ENCODE measurements at regions of chr14 and their contacts with region 1.

Region 1: GRCh38 chr14:96215452-96216244 is 11.0 kb downstream of the BDKRB2 start:
- DNase-seq: no peak
- H3K4me3 ChIP-seq: no peak overlapping the region
- H3K27ac ChIP-seq: peak overlapping the region; percentile 57
- H3K27me3 ChIP-seq: no peaks in the 10 kb centered on the region
- CTCF ChIP-seq: no peak

Region 2: GRCh38 chr14:95483309-95484165 is 732.1 kb before region 1 on chr14:
- CTCF ChIA-PET with region 1: no interaction called
- POLR2A ChIA-PET with region 1: interaction called, 10 read pairs
- DNase-seq: peak; percentile 87
- H3K4me3 ChIP-seq: no peak overlapping the region
- H3K27ac ChIP-seq: peak overlapping the region; percentile 81
- H3K27me3 ChIP-seq: no peaks in the 10 kb centered on the region
- CTCF ChIP-seq: no peak

Region 3: DNA sequence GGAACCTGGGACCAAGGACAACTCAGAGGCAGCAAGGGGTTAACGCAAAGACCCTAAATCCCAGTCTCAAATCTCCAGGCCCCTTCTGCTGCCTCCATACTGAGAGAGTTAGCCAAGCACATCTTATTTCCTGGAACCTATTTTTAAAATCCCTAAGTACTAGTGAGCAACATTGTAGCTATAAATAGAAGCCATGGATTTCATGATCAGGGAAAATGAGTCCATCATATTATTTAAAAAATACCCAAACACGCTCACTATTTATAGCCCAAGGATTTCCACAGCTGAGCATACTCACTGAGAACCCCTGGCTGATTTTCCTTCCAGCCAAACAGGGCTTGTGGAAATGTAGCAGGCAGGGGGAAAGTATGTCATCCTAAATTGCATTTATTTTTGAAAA is 358.4 kb before region 1 on chr14:
- CTCF ChIA-PET with region 1: no interaction called
- POLR2A ChIA-PET with region 1: no interaction called
- DNase-seq: no peak
- H3K4me3 ChIP-seq: no peak overlapping the region
- H3K27ac ChIP-seq: no peak overlapping the region
- H3K27me3 ChIP-seq: no peaks in the 10 kb centered on the region
- CTCF ChIP-seq: no peak

Region 4: DNA sequence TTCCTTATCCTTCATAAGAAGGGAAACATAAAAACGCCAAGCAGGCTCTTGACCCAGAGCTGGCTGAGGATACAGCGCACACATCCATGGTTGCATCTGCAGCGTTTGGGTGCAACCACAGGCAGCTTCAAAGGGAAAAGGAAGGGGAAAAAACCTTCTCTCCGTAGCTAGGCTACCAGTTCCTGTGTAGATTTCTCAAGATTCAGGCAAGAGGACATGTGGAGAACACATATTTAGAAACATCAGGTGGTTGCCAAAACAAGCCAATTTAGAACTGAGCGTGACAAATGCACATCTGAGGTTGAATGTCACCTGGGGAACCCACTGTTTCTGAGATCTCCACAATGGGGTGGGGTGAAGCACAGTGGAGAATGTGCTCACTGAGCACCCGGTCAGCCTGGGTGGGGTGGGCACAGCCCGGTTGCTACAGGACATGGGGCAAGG is 89.3 kb before region 1 on chr14:
- CTCF ChIA-PET with region 1: no interaction called
- POLR2A ChIA-PET with region 1: no interaction called
- DNase-seq: no peak
- H3K4me3 ChIP-seq: no peak overlapping the region
- H3K27ac ChIP-seq: no peak overlapping the region
- H3K27me3 ChIP-seq: no peaks in the 10 kb centered on the region
- CTCF ChIP-seq: no peak

Region 5: GRCh38 chr14:96194657-96195431 is 20.8 kb before region 1 on chr14:
- CTCF ChIA-PET with region 1: no interaction called
- POLR2A ChIA-PET with region 1: no interaction called
- DNase-seq: no peak
- H3K4me3 ChIP-seq: no peak overlapping the region
- H3K27ac ChIP-seq: no peak overlapping the region
- H3K27me3 ChIP-seq: no peaks in the 10 kb centered on the region
- CTCF ChIP-seq: no peak